Thyroid gland (tissue), 4 donors: ENCODE measurements at regions of chr22 and their contacts with region 1.

Region 1: DNA sequence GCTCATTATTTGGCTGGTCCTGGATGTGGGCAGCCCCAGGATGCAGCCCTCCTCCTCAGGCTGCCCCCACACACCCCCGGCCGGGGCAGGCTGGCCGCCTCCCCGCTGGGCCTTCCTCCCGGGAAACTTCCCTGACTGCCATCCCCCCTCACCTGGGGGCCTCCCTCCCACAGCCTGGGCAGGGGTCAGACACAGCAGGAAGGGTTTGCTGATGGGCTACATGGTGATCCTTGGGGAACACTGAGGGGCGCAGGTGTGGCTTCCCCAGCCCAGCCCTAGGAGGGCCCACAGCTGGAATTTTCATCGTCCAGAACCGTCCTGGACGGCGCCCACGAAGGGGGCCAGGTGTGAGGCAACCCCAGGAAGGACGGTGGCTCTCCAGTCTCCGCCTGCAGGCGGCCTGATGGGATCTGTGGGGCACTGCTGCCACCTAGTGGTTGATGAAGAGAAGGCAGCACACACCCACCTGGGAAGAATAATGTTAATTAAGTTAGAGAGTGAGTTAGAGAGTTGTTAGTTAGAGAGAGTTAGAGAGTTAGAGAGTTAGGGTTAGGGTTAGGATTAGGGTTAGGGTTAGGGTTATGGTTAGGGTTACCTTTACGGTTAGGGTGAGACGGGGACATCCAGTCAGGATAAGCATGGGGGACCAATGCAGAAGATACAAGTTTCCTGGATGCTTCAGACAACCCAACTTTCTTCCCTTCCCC is 75.9 kb upstream of the PRR5 start:
- DNase-seq: peak; percentile 58 to 66
- H3K4me3 ChIP-seq: no peak overlapping the region
- H3K27ac ChIP-seq: no peak overlapping the region
- H3K4me1 ChIP-seq: peaks cover 0 to 3% of the 10 kb centered on the region in 2 donors
- H3K27me3 ChIP-seq: no peaks in the 10 kb centered on the region
- CTCF ChIP-seq: peak; percentile 98 to 100 (median 99)
- POLR2A ChIP-seq: no peak

Region 2: GRCh38 chr22:43385770-43386641 is 1240.1 kb before region 1 on chr22:
- intact Hi-C with region 1: loop called (anchors 5 kb)
- DNase-seq: peak; percentile 68 to 72
- H3K4me3 ChIP-seq: no peak overlapping the region
- H3K27ac ChIP-seq: no peak overlapping the region
- H3K4me1 ChIP-seq: no peaks in the 10 kb centered on the region
- H3K27me3 ChIP-seq: no peaks in the 10 kb centered on the region
- CTCF ChIP-seq: peak; percentile 70 to 95 (median 82)
- POLR2A ChIP-seq: no peak

Region 3: GRCh38 chr22:43993027-43993760 is 632.9 kb before region 1 on chr22:
- intact Hi-C with region 1: loop called (anchors 5 kb)
- DNase-seq: peak; percentile 49 to 51
- H3K4me3 ChIP-seq: no peak overlapping the region
- H3K27ac ChIP-seq: no peak overlapping the region
- H3K4me1 ChIP-seq: no peaks in the 10 kb centered on the region
- H3K27me3 ChIP-seq: no peaks in the 10 kb centered on the region
- CTCF ChIP-seq: peak; percentile 73 to 95 (median 84)
- POLR2A ChIP-seq: no peak

Region 4: DNA sequence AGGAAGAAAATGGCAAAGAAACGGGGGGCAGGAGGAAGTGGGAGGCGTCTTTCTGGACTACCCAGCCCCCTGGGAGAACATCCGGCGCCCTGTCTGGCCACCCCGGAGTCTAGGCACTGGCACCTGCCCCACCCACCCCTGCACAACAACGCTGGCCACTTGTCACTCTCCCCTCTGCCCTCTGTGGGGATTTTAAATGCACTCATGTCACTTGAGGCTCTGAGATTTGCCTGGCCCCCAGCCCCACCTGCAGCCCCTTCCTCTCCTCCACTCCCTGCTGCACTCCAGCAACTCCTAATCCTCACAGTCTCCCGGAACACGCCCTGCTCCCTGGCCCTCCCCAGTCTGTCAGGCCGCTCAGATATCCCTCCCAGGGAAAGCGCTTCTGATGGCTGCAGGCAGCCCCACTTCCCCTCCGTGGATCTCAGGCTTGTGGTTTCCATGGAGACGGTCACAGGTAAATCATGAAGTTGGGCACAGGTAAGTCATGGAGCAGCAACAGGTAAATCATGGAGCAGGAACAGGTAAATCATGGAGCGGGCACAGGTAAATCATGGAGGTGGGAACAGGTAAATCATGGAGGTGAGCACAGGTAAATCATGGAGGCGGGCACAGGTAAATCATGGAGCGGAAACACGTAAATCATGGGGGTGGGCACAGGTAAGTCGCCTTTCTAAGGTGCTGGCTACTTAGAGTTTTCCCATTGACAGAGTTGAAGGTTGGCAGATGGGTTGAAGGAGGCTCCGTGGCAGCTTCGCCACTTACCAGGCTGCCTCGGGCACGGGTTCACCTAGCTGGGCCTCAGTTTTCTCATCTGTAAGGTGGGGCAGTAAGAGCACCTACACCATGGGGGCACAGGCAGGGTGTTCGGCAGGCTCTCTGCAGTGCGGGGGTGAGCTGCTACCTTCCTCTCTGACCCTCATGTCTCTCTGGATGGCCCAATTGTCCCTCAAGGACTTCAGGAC is 234.4 kb before region 1 on chr22:
- intact Hi-C with region 1: no loop called
- DNase-seq: no peak
- H3K4me3 ChIP-seq: no peak overlapping the region
- H3K27ac ChIP-seq: no peak overlapping the region
- H3K4me1 ChIP-seq: no peaks in the 10 kb centered on the region
- H3K27me3 ChIP-seq: no peaks in the 10 kb centered on the region
- CTCF ChIP-seq: no peak
- POLR2A ChIP-seq: no peak

Region 5: DNA sequence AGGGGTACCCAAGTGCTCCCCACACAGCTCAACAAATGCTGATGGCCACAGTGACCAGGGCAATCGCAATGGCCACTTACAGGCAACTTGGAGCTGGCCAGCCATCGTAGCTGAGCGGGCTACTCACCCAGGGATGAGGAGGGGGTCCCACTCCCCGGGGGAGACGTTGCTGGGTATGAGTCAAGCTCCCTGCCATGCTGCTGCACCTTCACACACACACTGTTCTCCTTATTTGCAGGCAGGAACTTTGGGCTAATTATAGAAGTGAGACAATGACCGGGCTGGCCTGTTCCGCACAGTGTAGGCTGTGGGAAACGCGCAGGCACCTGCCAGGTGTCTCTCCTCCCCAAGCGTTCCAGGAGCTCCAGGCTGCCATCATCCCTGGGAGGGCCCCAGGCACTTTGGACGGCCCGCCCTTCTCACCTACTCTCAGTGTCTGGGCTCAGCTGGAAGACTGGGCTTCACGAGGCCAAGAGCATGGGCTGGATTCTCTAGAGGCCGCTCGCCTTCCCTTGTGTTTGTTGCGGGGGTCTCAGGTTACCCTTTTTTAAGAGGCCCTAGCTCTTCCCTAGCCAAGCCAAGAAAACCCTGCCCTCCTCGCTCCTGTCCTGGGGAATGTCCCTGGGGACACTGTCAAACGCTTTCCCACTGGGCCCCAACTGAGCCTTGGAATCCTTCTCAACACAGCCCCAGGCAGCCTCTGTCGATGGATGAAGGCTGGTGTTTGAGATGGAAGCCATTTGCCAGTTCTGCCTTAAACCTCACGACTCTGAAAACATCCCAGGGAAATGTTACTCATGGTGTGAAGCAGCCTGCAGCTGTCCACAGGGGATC is 201.1 kb before region 1 on chr22:
- intact Hi-C with region 1: no loop called
- DNase-seq: no peak
- H3K4me3 ChIP-seq: no peak overlapping the region
- H3K27ac ChIP-seq: no peak overlapping the region
- H3K4me1 ChIP-seq: no peaks in the 10 kb centered on the region
- H3K27me3 ChIP-seq: no peaks in the 10 kb centered on the region
- CTCF ChIP-seq: no peak
- POLR2A ChIP-seq: no peak

Region 6: DNA sequence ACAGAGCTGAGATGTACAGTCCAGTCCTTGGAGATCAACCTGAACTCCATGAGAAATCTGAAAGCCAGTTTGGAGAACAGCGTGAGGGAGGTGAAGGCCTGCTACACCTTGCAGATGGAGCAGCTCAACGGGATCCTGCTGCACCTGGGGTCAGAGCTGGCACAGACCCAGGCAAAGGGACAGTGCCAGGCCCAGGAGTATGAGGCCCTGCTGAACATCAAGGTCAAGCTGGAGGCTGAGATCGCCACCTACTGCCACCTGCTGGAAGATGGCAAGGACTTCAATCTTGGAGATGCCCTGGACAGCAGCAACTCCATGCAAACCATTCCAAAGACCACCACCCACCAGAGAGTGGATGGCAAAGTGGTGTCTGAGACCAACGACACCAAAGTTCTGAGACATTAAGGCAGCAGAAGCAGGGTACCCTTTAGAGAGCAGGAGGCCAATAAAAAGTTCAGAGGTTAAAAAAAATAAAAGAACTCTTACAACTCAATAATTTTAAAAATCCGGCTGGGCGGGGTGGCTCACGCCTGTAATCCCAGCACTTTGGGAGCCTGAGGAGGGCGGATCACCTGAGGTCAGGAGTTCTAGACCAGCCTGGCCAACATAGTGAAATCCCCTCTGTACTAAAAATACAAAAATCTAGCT is 58.2 kb before region 1 on chr22:
- intact Hi-C with region 1: loop called (anchors 10 kb)
- DNase-seq: peak; percentile 49 to 51
- H3K4me3 ChIP-seq: no peak overlapping the region
- H3K27ac ChIP-seq: no peak overlapping the region
- H3K4me1 ChIP-seq: no peaks in the 10 kb centered on the region
- H3K27me3 ChIP-seq: no peaks in the 10 kb centered on the region
- CTCF ChIP-seq: peak in 5 of 6 experiments; percentile 15 to 52 (median 29)
- POLR2A ChIP-seq: no peak

Region 7: DNA sequence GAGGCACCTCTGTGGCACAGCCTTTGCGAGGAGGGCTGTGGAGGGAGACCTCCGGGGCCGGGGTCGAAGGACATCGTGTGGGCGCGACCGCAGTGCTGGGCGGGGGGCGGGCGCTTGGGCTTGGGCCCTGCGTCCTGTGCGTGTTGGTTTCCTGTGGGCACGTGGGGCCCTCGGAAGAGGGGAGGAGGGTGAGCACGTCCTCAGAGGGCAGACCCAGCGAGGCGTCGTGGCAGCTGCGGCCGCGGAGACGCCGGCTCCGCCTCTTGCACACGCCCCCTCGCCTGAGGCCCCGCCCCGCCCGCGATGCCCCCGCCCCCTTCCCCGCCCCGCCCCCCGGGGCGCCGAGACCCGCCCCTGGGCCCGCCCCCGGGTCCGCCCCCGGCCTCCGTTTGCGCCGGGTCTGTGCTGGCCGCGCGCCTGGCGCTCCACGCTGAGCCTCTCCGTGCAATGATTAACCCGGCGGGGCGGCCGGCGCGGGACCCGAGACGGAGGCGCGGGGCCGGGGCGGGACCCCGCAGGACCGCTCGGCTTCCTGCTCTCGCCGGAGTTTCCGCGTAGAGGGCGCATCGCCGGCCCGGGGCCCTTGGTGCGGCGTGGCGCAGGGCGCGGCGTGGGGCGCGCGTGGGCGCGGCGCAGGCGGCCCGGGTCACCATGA is 75.8 kb after region 1 on chr22 and contains the start of gene PRR5:
- intact Hi-C with region 1: no loop called
- DNase-seq: peak; percentile 75 to 80
- H3K4me3 ChIP-seq: peak within 1 kb of the TSS; percentile 36 to 50 (median 48)
- H3K27ac ChIP-seq: no peak within 1 kb of the TSS
- H3K4me1 ChIP-seq: peaks cover 10 to 23% of the 10 kb centered on the region in 2 donors
- H3K27me3 ChIP-seq: no peaks in the 10 kb centered on the region
- CTCF ChIP-seq: no peak
- POLR2A ChIP-seq: no peak
- total RNA-seq, gene PRR5: 17.3 to 31.8 (median 26.9) TPM